ENCODE measurements at regions of chr5 and their contacts with region 1.

Region 1: GRCh38 chr5:147628058-147628895 is 118.4 kb upstream of the DPYSL3 start:
- DNase-seq: peak in 6 of 10 donors; percentile 21 to 83 (median 64)
- H3K4me3 ChIP-seq: no peak overlapping the region
- H3K27ac ChIP-seq: peak overlapping the region in 7 of 59 donors; percentile 7 to 36 (median 18)
- H3K27me3 ChIP-seq: no peaks in the 10 kb centered on the region
- CTCF ChIP-seq: peak; percentile 64 to 97 (median 88)

Region 2: GRCh38 chr5:147669169-147669869 is 41.0 kb after region 1 on chr5:
- intact Hi-C with region 1: loop called in 1 of 2 experiments (anchors 5 kb)
- DNase-seq: peak in 1 of 10 donors; percentile 78
- H3K4me3 ChIP-seq: no peak overlapping the region
- H3K27ac ChIP-seq: peak overlapping the region in 20 of 59 donors; percentile 6 to 78 (median 27)
- H3K27me3 ChIP-seq: no peaks in the 10 kb centered on the region
- CTCF ChIP-seq: no peak

Region 3: DNA sequence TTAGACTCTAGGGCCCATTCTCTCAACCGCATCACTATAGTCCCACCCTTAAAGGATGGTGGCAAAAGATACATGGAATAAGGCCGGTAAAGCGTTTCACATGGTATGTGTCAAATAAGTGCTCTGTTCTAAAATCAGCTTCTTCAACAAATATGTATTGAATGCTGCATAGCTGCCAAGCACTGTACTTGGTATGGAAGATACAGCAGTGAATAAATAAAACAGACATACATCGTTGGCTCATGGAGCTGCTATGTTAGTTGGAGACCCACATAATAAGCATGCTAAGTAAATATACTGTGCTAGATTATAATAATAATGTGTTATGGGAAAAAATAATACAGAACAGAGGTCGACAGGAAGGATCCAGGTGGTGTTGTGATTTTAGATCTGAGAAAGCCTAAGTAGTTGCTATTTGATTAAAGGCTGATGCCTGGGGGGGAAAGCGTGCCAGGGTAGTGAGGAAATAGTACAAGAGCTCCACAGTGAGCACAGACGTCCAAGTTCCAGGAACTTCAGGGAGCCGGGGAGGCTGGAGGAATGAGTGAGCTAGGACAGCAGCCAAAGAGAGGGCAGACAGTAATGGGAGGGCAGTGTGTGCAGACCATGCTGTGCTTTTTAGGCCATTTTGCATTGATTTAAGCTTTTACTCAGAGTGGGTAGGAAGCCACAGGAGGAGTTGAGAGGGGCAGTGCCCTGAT is 60.5 kb after region 1 on chr5:
- intact Hi-C with region 1: loop called in 1 of 2 experiments (anchors 5 kb)
- DNase-seq: peak in 7 of 10 donors; percentile 32 to 66 (median 55)
- H3K4me3 ChIP-seq: no peak overlapping the region
- H3K27ac ChIP-seq: peak overlapping the region in 23 of 59 donors; percentile 0 to 58 (median 26)
- H3K27me3 ChIP-seq: no peaks in the 10 kb centered on the region
- CTCF ChIP-seq: no peak

Region 4: DNA sequence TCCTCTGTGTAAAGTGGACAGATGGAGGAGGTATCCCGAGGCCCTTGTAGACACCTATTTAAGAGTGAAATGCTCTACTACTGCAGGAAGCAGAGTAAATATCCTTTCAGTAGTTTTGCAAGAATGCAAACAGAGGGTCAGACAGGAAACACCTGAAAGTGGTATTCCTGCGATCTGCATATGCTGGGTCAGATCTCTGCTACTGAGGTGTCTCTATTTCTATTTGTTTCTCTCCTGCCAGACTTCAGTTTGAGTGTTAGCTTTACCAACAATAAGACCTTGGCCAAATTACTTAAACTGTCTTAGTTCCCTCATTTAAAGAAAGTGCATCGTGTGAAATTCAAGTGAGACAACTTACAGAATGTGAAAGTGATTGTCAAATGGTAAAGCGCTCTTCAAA is 106.6 kb after region 1 on chr5:
- intact Hi-C with region 1: loop called in 1 of 2 experiments (anchors 5 kb)
- DNase-seq: no peak
- H3K4me3 ChIP-seq: no peak overlapping the region
- H3K27ac ChIP-seq: peak overlapping the region in 13 of 59 donors; percentile 9 to 61 (median 28)
- H3K27me3 ChIP-seq: no peaks in the 10 kb centered on the region
- CTCF ChIP-seq: no peak

Region 5: GRCh38 chr5:147782110-147783028 is 154.1 kb after region 1 on chr5 and contains the start of gene JAKMIP2:
- intact Hi-C with region 1: loop called in 1 of 2 experiments (anchors 2 kb)
- DNase-seq: peak; percentile 93 to 99 (median 97)
- H3K4me3 ChIP-seq: peak within 1 kb of the TSS; percentile 43 to 88 (median 73)
- H3K27ac ChIP-seq: peak within 1 kb of the TSS; percentile 61 to 97 (median 91)
- H3K27me3 ChIP-seq: no peaks in the 10 kb centered on the region
- CTCF ChIP-seq: peak in 52 of 56 donors; percentile 24 to 76 (median 48)
- total RNA-seq, gene JAKMIP2: 32.2 to 60.7 (median 41.7) TPM

Region 6: GRCh38 chr5:147804334-147804733 is 176.1 kb after region 1 on chr5:
- intact Hi-C with region 1: no loop called
- DNase-seq: no peak
- H3K4me3 ChIP-seq: no peak overlapping the region
- H3K27ac ChIP-seq: no peak overlapping the region
- H3K27me3 ChIP-seq: no peaks in the 10 kb centered on the region
- CTCF ChIP-seq: no peak

Region 7: DNA sequence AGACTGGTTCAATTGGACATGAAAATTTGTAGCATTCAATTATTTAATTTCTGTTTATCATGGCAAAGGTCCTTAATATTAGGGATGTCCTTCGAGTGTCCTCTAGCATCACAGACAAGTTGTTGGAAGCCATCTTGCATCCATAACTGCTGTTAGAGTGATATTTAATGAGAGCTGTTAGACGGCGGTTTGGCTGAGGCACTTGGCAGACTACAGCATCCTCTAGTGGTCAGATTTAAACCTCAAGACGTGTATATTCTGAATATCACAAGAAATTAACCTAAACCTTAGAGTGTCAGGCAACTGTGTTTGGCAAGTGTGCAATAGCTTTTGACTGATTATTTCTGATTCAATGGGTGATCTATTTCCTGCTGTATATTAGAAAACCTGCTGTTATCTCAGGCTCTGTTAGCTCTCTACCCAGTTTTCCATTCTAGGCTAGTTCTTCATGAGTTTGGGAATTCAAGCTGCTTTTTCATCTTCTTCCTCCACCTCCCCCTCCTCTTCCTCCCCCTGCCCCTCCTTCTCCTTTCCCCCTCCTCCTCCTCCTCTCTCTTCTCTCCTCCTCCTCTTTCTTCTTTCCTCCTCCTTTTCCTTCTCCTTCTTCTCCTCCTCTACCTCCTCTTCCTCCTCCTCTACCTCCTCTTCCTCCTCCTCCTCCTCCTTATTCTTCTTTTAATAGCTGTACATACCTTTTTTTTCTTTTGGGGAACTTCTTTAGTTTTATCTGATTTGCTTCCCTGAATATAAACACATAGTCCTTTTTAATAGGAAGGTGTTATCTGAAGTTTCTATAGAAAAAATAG is 194.6 kb after region 1 on chr5:
- intact Hi-C with region 1: loop called (anchors 1 kb)
- DNase-seq: peak in 8 of 10 donors; percentile 34 to 77 (median 57)
- H3K4me3 ChIP-seq: no peak overlapping the region
- H3K27ac ChIP-seq: no peak overlapping the region
- H3K27me3 ChIP-seq: no peaks in the 10 kb centered on the region
- CTCF ChIP-seq: peak; percentile 84 to 99 (median 94)

Measured in dorsolateral prefrontal cortex (tissue), 120 donors.